Activated CD4-positive, alpha-beta T cell treated with anti-CD3 and anti-CD28 coated beads for 36 hours (primary cell): ENCODE measurements at regions of chr10 and their contacts with region 1.

Region 1: GRCh38 chr10:14648005-14648765 is 126.5 kb downstream of the FAM107B start:
- DNase-seq: peak; percentile 79
- ATAC-seq: peak; percentile 66
- H3K4me3 Mint-ChIP-seq: peak overlapping the region; percentile 65
- H3K27ac Mint-ChIP-seq: peak overlapping the region; percentile 98
- H3K4me1 Mint-ChIP-seq: peaks cover 85% of the 10 kb centered on the region
- H3K27me3 Mint-ChIP-seq: no peaks in the 10 kb centered on the region

Region 2: GRCh38 chr10:14385596-14386593 is 262.3 kb before region 1 on chr10:
- CTCF ChIA-PET with region 1: no interaction called
- POLR2A ChIA-PET with region 1: no interaction called
- intact Hi-C with region 1: loop called (anchors 1 kb)
- DNase-seq: peak; percentile 78
- ATAC-seq: peak; percentile 74
- H3K4me3 Mint-ChIP-seq: no peak overlapping the region
- H3K27ac Mint-ChIP-seq: no peak overlapping the region
- H3K4me1 Mint-ChIP-seq: peaks cover 74% of the 10 kb centered on the region
- H3K27me3 Mint-ChIP-seq: peaks cover 13% of the 10 kb centered on the region

Region 3: GRCh38 chr10:14556285-14556956 is 91.8 kb before region 1 on chr10:
- CTCF ChIA-PET with region 1: no interaction called
- POLR2A ChIA-PET with region 1: no interaction called
- intact Hi-C with region 1: loop called (anchors 2 to 5 kb)
- DNase-seq: peak; percentile 48
- ATAC-seq: peak; percentile 37
- H3K4me3 Mint-ChIP-seq: peak overlapping the region; percentile 17
- H3K27ac Mint-ChIP-seq: peak overlapping the region; percentile 86
- H3K4me1 Mint-ChIP-seq: peaks cover 93% of the 10 kb centered on the region
- H3K27me3 Mint-ChIP-seq: no peaks in the 10 kb centered on the region

Region 4: GRCh38 chr10:14588084-14588937 is 59.9 kb before region 1 on chr10:
- CTCF ChIA-PET with region 1: no interaction called
- POLR2A ChIA-PET with region 1: no interaction called
- intact Hi-C with region 1: loop called (anchors 1 kb)
- DNase-seq: peak; percentile 77
- ATAC-seq: peak; percentile 70
- H3K4me3 Mint-ChIP-seq: peak overlapping the region; percentile 40
- H3K27ac Mint-ChIP-seq: peak overlapping the region; percentile 89
- H3K4me1 Mint-ChIP-seq: peaks cover 93% of the 10 kb centered on the region
- H3K27me3 Mint-ChIP-seq: no peaks in the 10 kb centered on the region

Region 5: GRCh38 chr10:14665304-14665703 is 17.1 kb after region 1 on chr10:
- CTCF ChIA-PET with region 1: no interaction called
- POLR2A ChIA-PET with region 1: interaction called, 3 read pairs
- intact Hi-C with region 1: loop called (anchors 1 kb)
- DNase-seq: peak; percentile 43
- ATAC-seq: peak; percentile 81
- H3K4me3 Mint-ChIP-seq: no peak overlapping the region
- H3K27ac Mint-ChIP-seq: peak overlapping the region; percentile 59
- H3K4me1 Mint-ChIP-seq: peaks cover 60% of the 10 kb centered on the region
- H3K27me3 Mint-ChIP-seq: no peaks in the 10 kb centered on the region

Region 6: GRCh38 chr10:15122477-15123030 is 474.4 kb after region 1 on chr10:
- CTCF ChIA-PET with region 1: no interaction called
- POLR2A ChIA-PET with region 1: no interaction called
- intact Hi-C with region 1: loop called in 1 of 2 experiments (anchors 1 kb)
- DNase-seq: peak; percentile 47
- ATAC-seq: peak; percentile 72
- H3K4me3 Mint-ChIP-seq: peak overlapping the region; percentile 40
- H3K27ac Mint-ChIP-seq: peak overlapping the region; percentile 92
- H3K4me1 Mint-ChIP-seq: peaks cover 36% of the 10 kb centered on the region
- H3K27me3 Mint-ChIP-seq: no peaks in the 10 kb centered on the region